Activated B cell treated with CpG ODN at 0.5 μM for 24 hours (primary cell): ENCODE measurements at regions of chr5 and their contacts with region 1.

Region 1: DNA sequence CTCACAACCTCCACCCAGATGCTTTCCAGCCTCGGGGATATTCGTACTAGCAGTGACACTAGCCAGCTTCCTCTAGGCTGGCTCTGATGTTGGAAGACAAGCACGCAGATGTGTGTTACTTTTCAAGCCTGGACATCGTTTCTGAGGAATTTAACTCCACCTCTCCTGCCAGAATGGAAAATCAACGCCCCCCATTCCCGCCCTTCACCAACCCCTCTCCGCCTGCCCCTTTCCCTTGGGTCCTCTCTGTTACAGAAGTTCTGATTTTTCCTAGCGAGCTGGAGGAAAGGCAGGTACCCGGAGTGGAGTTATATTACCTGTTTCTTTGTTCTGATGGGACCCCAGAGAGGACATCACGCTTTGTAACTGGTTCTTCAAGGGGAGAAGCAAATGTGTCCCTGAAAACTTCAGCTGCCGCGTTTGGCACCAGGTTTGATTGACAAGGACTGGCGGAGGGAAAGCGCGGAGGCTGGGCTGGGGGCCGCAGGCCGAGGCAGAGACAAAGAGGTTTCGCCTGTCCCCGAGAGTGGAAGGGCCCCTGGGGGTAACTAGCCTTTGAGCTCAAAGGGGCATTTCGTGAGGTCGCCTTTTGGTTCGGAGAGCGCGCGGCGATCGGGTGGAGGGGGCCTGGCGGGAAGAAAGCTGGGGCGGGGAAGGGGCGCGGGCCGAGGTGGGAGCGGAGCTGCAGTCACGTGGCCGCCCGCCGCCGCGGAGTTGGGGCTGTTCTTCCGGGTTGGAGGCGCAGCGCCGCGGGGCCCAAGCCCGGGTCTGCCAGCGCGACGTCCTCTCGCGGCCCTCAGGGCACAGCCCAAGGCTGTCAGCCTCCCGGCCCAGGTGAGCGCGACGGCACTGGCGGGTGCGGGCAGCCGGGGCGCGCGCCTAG is at the start of gene NNT:
- DNase-seq: peak; percentile 76
- ATAC-seq: peak; percentile 69
- H3K4me3 Mint-ChIP-seq: peak within 1 kb of the TSS; percentile 95
- H3K27ac Mint-ChIP-seq: peak within 1 kb of the TSS; percentile 93
- H3K4me1 Mint-ChIP-seq: peaks cover 42% of the 10 kb centered on the region
- H3K27me3 Mint-ChIP-seq: no peaks in the 10 kb centered on the region
- CTCF ChIP-seq: no peak
- total RNA-seq, gene NNT: 59.0 and 63.0 TPM in 2 replicates

Region 2: DNA sequence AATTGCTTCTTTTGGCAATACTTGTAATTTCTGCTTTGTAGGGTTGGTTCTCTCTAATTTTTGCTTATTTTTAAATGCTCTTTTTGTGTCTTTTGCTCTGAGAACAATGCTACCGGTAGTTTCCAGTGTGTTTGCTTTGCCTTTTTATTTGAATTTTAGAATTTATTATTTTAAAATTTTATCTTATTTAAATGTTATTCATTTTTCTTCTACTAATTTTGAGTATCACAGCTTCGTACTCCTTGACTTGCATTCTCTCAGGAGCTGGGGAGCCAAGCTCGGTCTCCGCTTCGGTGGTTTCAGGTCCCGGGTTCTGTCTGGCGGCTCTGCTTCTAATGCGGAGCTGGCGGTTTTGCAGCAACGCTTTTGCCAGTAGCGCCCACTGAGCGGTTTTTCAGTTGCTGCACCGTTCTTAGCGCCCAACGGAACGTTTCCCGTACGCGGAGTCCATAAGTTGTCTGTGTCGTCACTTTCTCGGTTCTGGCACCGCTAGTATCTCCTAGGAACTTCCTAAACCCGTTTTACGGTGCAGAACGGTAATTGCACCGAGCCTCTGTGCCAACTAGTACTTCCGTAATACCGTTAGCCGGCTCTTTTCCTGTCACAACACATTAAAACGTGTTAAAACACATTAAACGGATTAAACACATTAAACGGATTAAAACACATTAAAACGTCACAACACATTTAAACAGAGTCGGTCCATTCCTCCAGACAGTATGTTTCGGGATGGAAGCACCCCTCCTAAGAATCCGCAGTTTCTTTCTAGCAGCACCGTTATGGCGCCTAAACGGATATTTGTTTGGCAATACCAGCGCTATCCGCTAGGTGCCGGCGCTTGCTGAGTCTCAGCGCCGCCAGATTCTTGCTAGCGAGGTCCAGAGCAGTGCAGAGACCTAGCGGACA is 608.2 kb before region 1 on chr5:
- CTCF ChIA-PET with region 1: no interaction called
- POLR2A ChIA-PET with region 1: interaction called, 10 read pairs
- intact Hi-C with region 1: loop called (anchors 5 kb)
- DNase-seq: peak; percentile 72
- ATAC-seq: peak; percentile 66
- H3K4me3 Mint-ChIP-seq: peak overlapping the region; percentile 99
- H3K27ac Mint-ChIP-seq: peak overlapping the region; percentile 100
- H3K4me1 Mint-ChIP-seq: peaks cover 34% of the 10 kb centered on the region
- H3K27me3 Mint-ChIP-seq: peaks cover under 1% of the 10 kb centered on the region
- CTCF ChIP-seq: peak; percentile 89

Region 3: GRCh38 chr5:43066799-43067741 is 535.6 kb before region 1 on chr5:
- CTCF ChIA-PET with region 1: no interaction called
- POLR2A ChIA-PET with region 1: interaction called, 11 read pairs
- intact Hi-C with region 1: loop called (anchors 1 kb)
- DNase-seq: peak; percentile 83
- ATAC-seq: peak; percentile 55
- H3K4me3 Mint-ChIP-seq: peak overlapping the region; percentile 95
- H3K27ac Mint-ChIP-seq: peak overlapping the region; percentile 99
- H3K4me1 Mint-ChIP-seq: peaks cover 40% of the 10 kb centered on the region
- H3K27me3 Mint-ChIP-seq: no peaks in the 10 kb centered on the region
- CTCF ChIP-seq: no peak

Region 4: DNA sequence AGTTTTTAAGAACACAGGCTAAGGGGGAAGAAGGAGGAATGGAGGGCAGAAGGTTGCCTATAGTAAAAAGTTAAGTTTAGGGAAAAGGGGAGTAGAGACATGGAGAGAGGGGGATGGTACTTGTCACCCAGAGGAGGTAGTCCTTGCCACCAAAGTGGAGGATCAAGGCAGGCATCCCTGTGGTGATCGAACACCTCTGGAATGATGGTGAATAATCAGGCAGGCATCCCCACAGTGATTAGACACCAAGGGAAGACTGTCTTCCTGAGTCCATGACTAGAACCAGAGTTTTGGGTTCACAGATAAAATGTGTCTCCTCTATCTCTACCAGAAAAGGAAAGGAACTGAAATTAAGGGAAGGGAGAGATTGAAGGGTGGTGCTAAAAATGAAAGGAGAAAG is 270.3 kb before region 1 on chr5:
- CTCF ChIA-PET with region 1: no interaction called
- POLR2A ChIA-PET with region 1: no interaction called
- intact Hi-C with region 1: no loop called
- DNase-seq: no peak
- ATAC-seq: no peak
- H3K4me3 Mint-ChIP-seq: no peak overlapping the region
- H3K27ac Mint-ChIP-seq: no peak overlapping the region
- H3K4me1 Mint-ChIP-seq: no peaks in the 10 kb centered on the region
- H3K27me3 Mint-ChIP-seq: peaks cover 23% of the 10 kb centered on the region
- CTCF ChIP-seq: no peak

Region 5: GRCh38 chr5:43396762-43397304 is 205.9 kb before region 1 on chr5:
- CTCF ChIA-PET with region 1: no interaction called
- POLR2A ChIA-PET with region 1: no interaction called
- intact Hi-C with region 1: loop called (anchors 5 kb)
- DNase-seq: peak; percentile 67
- ATAC-seq: peak; percentile 100
- H3K4me3 Mint-ChIP-seq: peak overlapping the region; percentile 99
- H3K27ac Mint-ChIP-seq: peak overlapping the region; percentile 96
- H3K4me1 Mint-ChIP-seq: peaks cover 20% of the 10 kb centered on the region
- H3K27me3 Mint-ChIP-seq: no peaks in the 10 kb centered on the region
- CTCF ChIP-seq: no peak

Region 6: GRCh38 chr5:43498581-43498980 is 104.1 kb before region 1 on chr5:
- CTCF ChIA-PET with region 1: no interaction called
- POLR2A ChIA-PET with region 1: no interaction called
- intact Hi-C with region 1: no loop called
- DNase-seq: no peak
- ATAC-seq: no peak
- H3K4me3 Mint-ChIP-seq: no peak overlapping the region
- H3K27ac Mint-ChIP-seq: no peak overlapping the region
- H3K4me1 Mint-ChIP-seq: no peaks in the 10 kb centered on the region
- H3K27me3 Mint-ChIP-seq: no peaks in the 10 kb centered on the region
- CTCF ChIP-seq: no peak

Region 7: DNA sequence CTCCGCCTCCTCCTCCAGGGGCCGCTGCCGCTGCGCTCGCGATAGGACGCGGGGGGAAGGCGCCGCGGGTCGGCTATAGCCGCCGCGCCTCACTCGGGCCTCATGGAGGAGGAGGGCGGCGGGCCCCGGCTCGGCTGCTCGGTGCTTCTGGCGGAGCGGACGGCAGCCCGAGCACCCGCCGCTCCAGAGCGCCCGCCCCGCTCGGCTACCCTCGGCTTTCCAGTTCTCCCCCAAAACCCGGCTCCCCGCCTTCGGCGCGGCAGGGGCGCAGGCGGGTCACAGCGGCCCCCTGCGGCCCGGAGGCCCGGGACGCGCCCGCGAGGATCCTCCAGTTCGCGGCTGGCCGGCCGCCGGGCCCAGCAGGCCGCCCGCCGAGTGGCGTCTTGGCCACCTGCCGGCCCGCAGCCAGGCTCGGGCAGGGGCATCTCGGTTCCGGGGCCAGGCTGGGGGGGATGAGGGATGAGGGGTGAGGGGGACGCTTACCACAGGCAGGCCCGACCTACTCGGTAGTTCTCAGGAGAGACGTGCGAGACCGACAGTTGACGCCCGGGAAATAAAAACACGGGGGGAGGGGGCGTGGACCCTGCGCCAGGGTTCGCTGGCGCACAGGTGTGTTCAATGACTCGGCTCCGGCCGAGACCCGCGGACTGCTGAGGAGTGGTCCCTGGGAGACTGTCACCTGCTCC is 45.7 kb before region 1 on chr5 and contains the start of gene PAIP1:
- CTCF ChIA-PET with region 1: interaction called, 3 read pairs
- POLR2A ChIA-PET with region 1: interaction called, 29 read pairs
- intact Hi-C with region 1: loop called (anchors 1 kb)
- DNase-seq: peak; percentile 90
- ATAC-seq: peak; percentile 93
- H3K4me3 Mint-ChIP-seq: peak within 1 kb of the TSS; percentile 89
- H3K27ac Mint-ChIP-seq: peak within 1 kb of the TSS; percentile 94
- H3K4me1 Mint-ChIP-seq: peaks cover 21% of the 10 kb centered on the region
- H3K27me3 Mint-ChIP-seq: no peaks in the 10 kb centered on the region
- CTCF ChIP-seq: peak; percentile 41
- total RNA-seq, gene PAIP1: 35.1 and 38.3 TPM in 2 replicates

Region 8: DNA sequence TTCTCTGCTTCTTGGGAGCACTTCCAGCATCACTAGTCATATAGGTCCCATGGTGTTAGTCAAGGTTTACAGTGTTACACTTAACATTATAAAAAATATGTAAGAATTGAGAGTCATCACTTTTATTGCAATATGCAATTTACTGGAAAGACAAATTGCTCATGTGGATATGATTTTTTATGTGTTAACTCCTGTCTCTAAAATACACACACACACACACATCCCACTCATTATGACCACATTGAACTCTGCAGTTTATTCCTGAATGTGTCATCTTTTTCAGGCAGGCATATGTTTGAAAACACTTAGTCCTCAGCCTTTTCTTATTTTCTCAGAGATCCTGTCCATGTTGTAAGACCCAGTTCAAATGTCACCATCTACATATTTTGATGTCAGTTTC is 1057.5 kb after region 1 on chr5:
- CTCF ChIA-PET with region 1: no interaction called
- POLR2A ChIA-PET with region 1: no interaction called
- intact Hi-C with region 1: no loop called
- DNase-seq: no peak
- ATAC-seq: no peak
- H3K4me3 Mint-ChIP-seq: no peak overlapping the region
- H3K27ac Mint-ChIP-seq: no peak overlapping the region
- H3K4me1 Mint-ChIP-seq: no peaks in the 10 kb centered on the region
- H3K27me3 Mint-ChIP-seq: no peaks in the 10 kb centered on the region
- CTCF ChIP-seq: no peak

Region 9: DNA sequence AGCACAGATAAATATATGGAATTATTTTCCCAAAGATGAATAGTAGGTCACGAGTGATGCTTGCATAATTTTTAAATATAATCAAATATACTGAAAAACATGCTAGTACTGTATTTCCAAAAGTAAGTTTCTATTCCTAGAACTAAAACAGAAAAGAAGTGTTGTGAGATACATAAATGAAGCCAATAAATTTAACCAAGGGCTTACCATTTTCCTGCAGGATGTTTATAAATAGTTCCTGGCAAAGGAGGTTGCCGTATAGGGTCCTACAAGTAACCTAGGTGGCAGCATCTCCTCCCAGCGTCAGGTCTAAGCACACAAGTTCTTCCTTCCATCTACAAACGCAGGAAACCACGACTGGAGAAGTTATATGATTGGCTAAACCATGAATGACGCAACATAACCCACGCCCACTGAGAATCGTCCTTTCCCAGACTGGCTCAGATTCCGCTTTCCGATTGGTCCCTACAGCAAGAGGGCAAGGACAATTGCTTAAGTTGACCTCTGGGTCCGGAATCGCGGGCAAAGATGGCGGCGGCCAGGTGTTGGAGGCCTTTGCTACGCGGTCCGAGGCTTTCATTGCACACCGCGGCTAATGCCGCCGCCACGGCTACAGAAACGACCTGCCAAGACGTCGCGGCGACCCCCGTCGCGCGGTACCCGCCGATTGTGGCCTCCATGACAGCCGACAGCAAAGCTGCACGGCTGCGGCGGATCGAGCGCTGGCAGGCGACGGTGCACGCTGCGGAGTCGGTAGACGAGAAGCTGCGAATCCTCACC is 1205.9 kb after region 1 on chr5 and contains the start of gene MRPS30:
- CTCF ChIA-PET with region 1: no interaction called
- POLR2A ChIA-PET with region 1: no interaction called
- intact Hi-C with region 1: loop called (anchors 1 kb)
- DNase-seq: peak; percentile 72
- ATAC-seq: peak; percentile 96
- H3K4me3 Mint-ChIP-seq: peak within 1 kb of the TSS; percentile 97
- H3K27ac Mint-ChIP-seq: peak within 1 kb of the TSS; percentile 94
- H3K4me1 Mint-ChIP-seq: peaks cover 31% of the 10 kb centered on the region
- H3K27me3 Mint-ChIP-seq: peaks cover 4% of the 10 kb centered on the region
- CTCF ChIP-seq: no peak
- total RNA-seq, gene MRPS30: 41.4 and 41.8 TPM in 2 replicates